ENCODE measurements at regions of chr16 and their contacts with region 1.

Region 1: GRCh38 chr16:19907161-19907992 is 22.7 kb upstream of the GPRC5B start:
- DNase-seq: peak; percentile 57
- H3K4me3 ChIP-seq: no peak overlapping the region
- H3K27ac ChIP-seq: no peak overlapping the region
- H3K4me1 ChIP-seq: no peaks in the 10 kb centered on the region
- H3K27me3 ChIP-seq: no peaks in the 10 kb centered on the region
- CTCF ChIP-seq: peak; percentile 92

Region 2: GRCh38 chr16:19963301-19963700 is 55.9 kb after region 1 on chr16:
- intact Hi-C with region 1: loop called (anchors 10 kb)
- DNase-seq: no peak
- H3K4me3 ChIP-seq: no peak overlapping the region
- H3K27ac ChIP-seq: no peak overlapping the region
- H3K4me1 ChIP-seq: no peaks in the 10 kb centered on the region
- H3K27me3 ChIP-seq: no peaks in the 10 kb centered on the region
- CTCF ChIP-seq: no peak

Region 3: DNA sequence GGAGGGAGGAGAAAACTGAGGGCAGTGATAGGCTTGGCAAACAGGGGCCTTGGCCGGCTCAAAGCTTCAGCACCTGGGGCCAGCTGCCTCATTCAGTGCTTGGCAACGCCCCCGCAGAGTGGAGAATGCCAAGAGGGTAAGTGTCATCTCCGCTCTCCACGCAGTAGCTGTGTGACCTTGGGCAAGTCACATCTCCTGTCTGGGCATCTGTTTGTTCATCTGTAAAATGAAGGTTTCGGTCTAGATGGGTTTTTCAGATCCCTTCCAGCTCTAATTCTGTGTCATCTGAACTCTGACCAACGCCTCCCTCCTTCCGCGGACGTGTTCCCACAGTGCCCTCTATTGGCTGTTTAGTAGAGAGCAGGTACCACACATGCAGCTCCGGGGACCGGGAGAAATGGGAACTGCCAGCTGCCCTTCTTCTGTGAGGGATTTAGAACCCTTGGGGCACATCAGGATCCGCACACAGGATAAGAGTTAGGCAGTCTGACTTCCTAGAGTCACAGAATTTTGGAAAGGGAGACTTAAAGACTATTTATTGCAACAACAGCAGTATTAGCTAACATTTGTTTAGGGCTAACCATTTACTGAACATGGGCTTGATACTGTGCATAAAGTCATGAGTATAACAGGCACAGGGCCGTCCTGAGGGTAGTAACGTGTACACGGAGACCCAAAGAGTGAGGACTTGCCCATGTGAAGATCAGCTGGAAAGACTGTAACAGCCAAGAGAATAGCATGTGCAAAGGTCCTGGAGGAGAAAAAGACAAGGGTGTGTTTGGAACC is 393.1 kb after region 1 on chr16:
- intact Hi-C with region 1: loop called (anchors 2 kb)
- DNase-seq: peak; percentile 41
- H3K4me3 ChIP-seq: no peak overlapping the region
- H3K27ac ChIP-seq: no peak overlapping the region
- H3K4me1 ChIP-seq: no peaks in the 10 kb centered on the region
- H3K27me3 ChIP-seq: no peaks in the 10 kb centered on the region
- CTCF ChIP-seq: peak; percentile 57

Region 4: GRCh38 chr16:20383106-20384029 is 476.0 kb after region 1 on chr16:
- intact Hi-C with region 1: loop called (anchors 2 kb)
- DNase-seq: peak; percentile 74
- H3K4me3 ChIP-seq: no peak overlapping the region
- H3K27ac ChIP-seq: no peak overlapping the region
- H3K4me1 ChIP-seq: no peaks in the 10 kb centered on the region
- H3K27me3 ChIP-seq: no peaks in the 10 kb centered on the region
- CTCF ChIP-seq: peak; percentile 76

Measured in colonic mucosa (tissue), 4 donors.